Left colon (tissue), 2 donors: ENCODE measurements at regions of chr1 and their contacts with region 1.

Region 1: GRCh38 chr1:208245185-208245705 is 1.1 kb upstream of the PLXNA2 start:
- DNase-seq: peak; percentile 92 to 98
- ATAC-seq: peak; percentile 57

Region 2: GRCh38 chr1:208024406-208024805 is 220.8 kb before region 1 on chr1:
- intact Hi-C with region 1: loop called (anchors 5 to 10 kb)
- DNase-seq: no peak
- ATAC-seq: no peak

Region 3: DNA sequence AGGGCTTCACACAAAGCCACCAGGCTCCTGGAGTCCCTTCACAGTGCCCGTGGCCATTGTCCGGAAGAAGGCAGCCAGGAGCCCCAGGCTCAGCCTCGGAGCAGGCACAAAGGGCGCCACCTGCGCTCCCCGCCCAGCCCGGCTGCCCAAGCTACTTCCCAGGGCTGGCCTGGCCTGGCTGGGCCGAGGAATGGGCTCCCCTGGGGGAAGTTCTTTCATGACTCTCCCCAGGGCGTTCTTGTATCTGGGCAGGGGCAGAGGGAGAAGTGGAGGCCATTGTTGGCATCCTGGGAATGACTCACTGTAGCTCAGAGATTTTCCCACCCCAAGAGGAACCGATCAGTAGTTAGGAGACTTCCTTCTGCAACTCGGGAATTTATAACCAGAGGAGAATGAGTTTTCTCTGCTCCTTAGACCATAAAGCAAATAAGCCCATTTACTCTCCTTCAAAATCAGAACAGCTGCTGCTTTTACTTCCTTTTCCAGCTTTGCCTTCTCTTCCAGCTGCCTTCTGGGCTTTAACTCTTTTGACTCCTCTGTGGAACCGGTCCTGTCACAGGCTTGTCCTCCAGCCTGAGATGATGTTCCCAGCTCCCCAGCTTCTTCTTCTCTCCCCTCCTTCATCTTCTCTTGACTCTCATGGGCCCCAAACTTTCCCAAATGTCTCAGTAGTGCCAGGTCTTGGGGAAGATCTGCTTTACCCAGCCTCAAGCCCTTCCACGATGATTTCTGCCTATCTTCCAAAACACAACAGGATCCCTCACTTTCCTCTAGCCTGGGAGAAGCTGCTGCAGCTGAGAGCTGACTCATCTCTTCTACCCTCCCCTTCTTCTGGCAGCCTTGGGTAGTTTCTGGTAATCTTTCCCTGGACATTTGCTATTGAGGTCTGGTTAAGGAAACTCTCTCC is 215.6 kb before region 1 on chr1:
- intact Hi-C with region 1: loop called (anchors 5 to 10 kb)
- DNase-seq: peak in 1 of 2 donors; percentile 34
- ATAC-seq: peak; percentile 72

Region 4: DNA sequence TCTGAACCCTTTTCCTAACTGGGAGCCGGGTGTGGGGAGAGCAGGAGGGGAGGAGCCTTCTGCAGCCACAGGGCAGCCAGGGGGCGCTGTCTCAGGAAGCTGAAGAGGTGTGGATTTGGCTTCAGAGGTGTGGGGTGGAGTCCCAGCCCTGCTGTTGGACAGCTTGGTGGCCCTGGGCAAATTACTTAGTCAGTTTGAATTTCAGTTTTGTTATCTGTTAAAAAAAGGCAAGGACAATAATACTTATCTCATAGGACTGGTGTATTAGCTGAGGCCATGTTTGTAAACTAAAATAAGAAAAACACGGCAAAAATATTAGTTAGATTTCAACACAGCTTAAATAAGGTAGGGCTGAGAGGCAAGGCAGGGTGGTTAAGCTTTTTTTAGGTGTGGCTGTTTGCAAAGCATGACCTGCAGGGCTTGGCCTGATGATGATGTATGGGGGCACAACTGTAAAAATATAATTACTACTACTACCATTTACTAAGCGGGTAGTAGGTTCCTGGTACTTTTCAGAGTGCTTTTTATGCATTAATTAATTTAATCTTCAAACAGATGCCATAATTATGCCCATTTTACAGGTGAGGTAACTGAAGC is 112.9 kb before region 1 on chr1:
- intact Hi-C with region 1: loop called in 1 of 2 experiments (anchors 10 kb)
- DNase-seq: peak; percentile 90 to 97
- ATAC-seq: peak; percentile 96

Region 5: GRCh38 chr1:208397286-208397685 is 152.0 kb after region 1 on chr1:
- intact Hi-C with region 1: no loop called
- DNase-seq: no peak
- ATAC-seq: no peak